Breast epithelium (tissue), 4 donors: ENCODE measurements at regions of chr6 and their contacts with region 1.

Region 1: GRCh38 chr6:109325400-109325801 is 56.9 kb downstream of the CD164 start:
- DNase-seq: no peak
- H3K4me3 ChIP-seq: no peak overlapping the region
- H3K27ac ChIP-seq: no peak overlapping the region
- H3K4me1 ChIP-seq: no peaks in the 10 kb centered on the region
- H3K27me3 ChIP-seq: no peaks in the 10 kb centered on the region
- CTCF ChIP-seq: no peak
- POLR2A ChIP-seq: no peak

Region 2: GRCh38 chr6:109561844-109562243 is 236.4 kb after region 1 on chr6:
- intact Hi-C with region 1: loop called (anchors 5 kb)
- DNase-seq: no peak
- H3K4me3 ChIP-seq: no peak overlapping the region
- H3K27ac ChIP-seq: no peak overlapping the region
- H3K4me1 ChIP-seq: no peaks in the 10 kb centered on the region
- H3K27me3 ChIP-seq: no peaks in the 10 kb centered on the region
- CTCF ChIP-seq: no peak
- POLR2A ChIP-seq: no peak